Mammary epithelial cell (primary cell): ENCODE measurements at regions of chr17 and their contacts with region 1.

Region 1: DNA sequence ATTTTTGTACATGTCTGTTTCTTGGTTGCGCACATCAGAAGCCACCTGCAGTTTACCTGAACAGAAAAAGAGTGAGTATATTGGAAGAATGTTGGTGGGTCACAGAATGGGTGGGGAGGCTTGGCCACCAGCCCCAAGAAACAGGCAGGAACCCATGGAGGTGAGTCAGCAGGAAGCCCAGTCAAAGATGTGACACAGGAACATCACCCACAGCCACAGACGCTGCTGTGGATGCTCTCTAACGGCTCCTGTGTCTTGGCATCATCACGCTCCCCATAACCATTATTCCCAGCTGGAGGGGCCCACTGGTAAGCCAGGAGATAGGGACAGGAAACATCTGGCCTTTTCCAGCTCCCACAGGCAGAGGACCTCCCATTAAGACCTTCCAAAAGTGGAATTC is 94.0 kb upstream of the WSB1 start:
- DNase-seq: peak; percentile 8
- H3K4me3 ChIP-seq: no peak overlapping the region
- H3K27ac ChIP-seq: no peak overlapping the region
- H3K4me1 ChIP-seq: no peaks in the 10 kb centered on the region
- H3K27me3 ChIP-seq: no peaks in the 10 kb centered on the region
- CTCF ChIP-seq: no peak

Region 2: GRCh38 chr17:27091043-27091497 is 108.9 kb before region 1 on chr17:
- CTCF ChIA-PET with region 1: no interaction called
- dilution Hi-C with region 1: no loop called
- in situ Hi-C with region 1: loop called in 1 of 2 experiments (anchors 25 kb)
- intact Hi-C with region 1: no loop called
- DNase-seq: no peak
- H3K4me3 ChIP-seq: no peak overlapping the region
- H3K27ac ChIP-seq: no peak overlapping the region
- H3K4me1 ChIP-seq: no peaks in the 10 kb centered on the region
- H3K27me3 ChIP-seq: no peaks in the 10 kb centered on the region
- CTCF ChIP-seq: no peak

Region 3: DNA sequence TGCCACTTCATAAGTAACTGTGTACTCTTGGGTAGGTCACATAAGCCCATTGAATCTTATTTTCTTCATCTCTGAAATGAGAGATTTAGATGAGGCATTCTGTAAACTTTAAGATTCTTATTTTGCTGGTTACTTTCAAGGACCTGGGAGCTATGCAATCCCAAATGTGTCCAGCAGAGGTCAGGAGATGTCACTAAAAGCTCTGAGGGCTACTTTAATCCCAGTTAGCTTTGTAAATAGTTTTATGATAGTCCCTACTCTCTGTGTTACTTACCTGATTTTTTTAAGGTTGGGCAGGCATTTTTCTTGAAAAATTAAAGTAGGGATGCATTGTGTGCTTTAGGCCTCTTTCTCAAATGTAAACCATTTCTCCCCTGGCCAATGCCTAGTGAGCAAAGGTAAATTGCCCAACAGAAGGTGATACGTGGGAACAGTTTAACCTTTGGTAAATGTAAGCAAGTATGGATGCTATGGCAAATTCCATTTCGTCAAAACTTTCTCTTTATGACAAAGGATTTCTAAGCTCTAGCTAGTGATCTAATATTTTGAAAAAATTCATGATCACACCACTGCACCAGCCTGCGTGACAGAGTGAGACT is 36.9 kb after region 1 on chr17:
- CTCF ChIA-PET with region 1: no interaction called
- dilution Hi-C with region 1: no loop called
- in situ Hi-C with region 1: no loop called
- intact Hi-C with region 1: loop called (anchors 5 kb)
- DNase-seq: peak; percentile 52
- H3K4me3 ChIP-seq: no peak overlapping the region
- H3K27ac ChIP-seq: no peak overlapping the region
- H3K4me1 ChIP-seq: peaks cover 7% of the 10 kb centered on the region
- H3K27me3 ChIP-seq: no peaks in the 10 kb centered on the region
- CTCF ChIP-seq: peak; percentile 90 to 96

Region 4: GRCh38 chr17:27256225-27257030 is 56.5 kb after region 1 on chr17:
- CTCF ChIA-PET with region 1: no interaction called
- dilution Hi-C with region 1: no loop called
- in situ Hi-C with region 1: no loop called
- intact Hi-C with region 1: no loop called
- DNase-seq: no peak
- H3K4me3 ChIP-seq: no peak overlapping the region
- H3K27ac ChIP-seq: no peak overlapping the region
- H3K4me1 ChIP-seq: no peaks in the 10 kb centered on the region
- H3K27me3 ChIP-seq: no peaks in the 10 kb centered on the region
- CTCF ChIP-seq: no peak

Region 5: GRCh38 chr17:27293898-27294688 is 94.1 kb after region 1 on chr17 and contains the start of gene WSB1:
- CTCF ChIA-PET with region 1: no interaction called
- dilution Hi-C with region 1: no loop called
- in situ Hi-C with region 1: no loop called
- intact Hi-C with region 1: loop called (anchors 5 kb)
- DNase-seq: peak; percentile 84
- H3K4me3 ChIP-seq: peak within 1 kb of the TSS; percentile 75 to 97 (median 94)
- H3K27ac ChIP-seq: peak within 1 kb of the TSS; percentile 93
- H3K4me1 ChIP-seq: peaks cover 16% of the 10 kb centered on the region
- H3K27me3 ChIP-seq: no peaks in the 10 kb centered on the region
- CTCF ChIP-seq: peak in 1 of 2 donors; percentile 3
- total RNA-seq, gene WSB1: 93.0 to 119 TPM

Region 6: GRCh38 chr17:27332485-27333409 is 132.8 kb after region 1 on chr17:
- CTCF ChIA-PET with region 1: interaction called, 4 read pairs
- dilution Hi-C with region 1: no loop called
- in situ Hi-C with region 1: no loop called
- intact Hi-C with region 1: loop called (anchors 1 kb)
- DNase-seq: peak; percentile 98
- H3K4me3 ChIP-seq: peak overlapping the region; percentile 51 to 62 (median 57)
- H3K27ac ChIP-seq: peak overlapping the region; percentile 89
- H3K4me1 ChIP-seq: peaks cover 30% of the 10 kb centered on the region
- H3K27me3 ChIP-seq: no peaks in the 10 kb centered on the region
- CTCF ChIP-seq: peak; percentile 65 to 91